Left colon (tissue), 2 donors: ENCODE measurements at regions of chr13 and their contacts with region 1.

Region 1: GRCh38 chr13:47774671-47774994 is 226.4 kb downstream of the SUCLA2 start:
- DNase-seq: no peak
- ATAC-seq: no peak

Region 2: DNA sequence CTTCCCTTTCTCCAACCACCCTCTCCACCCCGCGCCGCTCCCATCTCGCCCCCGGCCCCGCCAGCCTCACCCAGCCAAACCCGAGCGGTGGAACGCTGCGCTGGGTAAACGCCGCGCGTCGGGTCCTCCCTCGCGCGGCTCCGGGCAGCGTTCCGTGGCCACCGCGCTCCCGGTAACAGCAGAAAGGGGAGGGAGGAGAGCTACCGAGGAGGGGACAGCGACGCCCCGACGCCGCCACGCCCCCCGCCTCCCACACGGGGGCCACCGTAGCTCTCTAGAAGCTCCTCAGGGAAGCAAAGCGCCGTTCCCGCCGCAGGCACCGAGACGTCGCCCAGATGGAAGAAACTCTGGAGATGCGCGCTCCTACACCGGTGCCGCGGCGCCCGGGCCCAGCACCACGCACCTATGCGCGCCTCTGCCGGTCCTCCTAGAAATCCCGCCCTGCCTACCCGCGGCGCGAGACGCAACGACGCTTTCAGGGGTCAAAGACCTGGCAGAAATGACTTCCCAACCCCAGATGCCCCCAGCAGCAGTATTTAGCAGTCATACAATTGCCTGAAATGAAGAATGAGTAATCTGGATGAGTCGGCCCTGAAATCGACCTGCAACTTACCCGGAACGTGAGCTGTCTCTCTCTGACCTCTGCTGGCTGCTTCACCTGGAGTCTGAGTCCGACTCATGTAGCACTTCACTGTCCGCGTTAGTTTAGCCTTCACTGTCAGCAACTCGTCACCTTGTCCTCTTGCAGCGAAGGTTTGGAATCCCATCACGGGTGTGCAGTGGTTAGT is 1387.4 kb before region 1 on chr13 and contains the start of gene RUBCNL:
- intact Hi-C with region 1: no loop called
- DNase-seq: peak; percentile 75 to 78
- ATAC-seq: peak; percentile 69
- total RNA-seq, gene RUBCNL: 14.9 to 28.4 TPM

Region 3: DNA sequence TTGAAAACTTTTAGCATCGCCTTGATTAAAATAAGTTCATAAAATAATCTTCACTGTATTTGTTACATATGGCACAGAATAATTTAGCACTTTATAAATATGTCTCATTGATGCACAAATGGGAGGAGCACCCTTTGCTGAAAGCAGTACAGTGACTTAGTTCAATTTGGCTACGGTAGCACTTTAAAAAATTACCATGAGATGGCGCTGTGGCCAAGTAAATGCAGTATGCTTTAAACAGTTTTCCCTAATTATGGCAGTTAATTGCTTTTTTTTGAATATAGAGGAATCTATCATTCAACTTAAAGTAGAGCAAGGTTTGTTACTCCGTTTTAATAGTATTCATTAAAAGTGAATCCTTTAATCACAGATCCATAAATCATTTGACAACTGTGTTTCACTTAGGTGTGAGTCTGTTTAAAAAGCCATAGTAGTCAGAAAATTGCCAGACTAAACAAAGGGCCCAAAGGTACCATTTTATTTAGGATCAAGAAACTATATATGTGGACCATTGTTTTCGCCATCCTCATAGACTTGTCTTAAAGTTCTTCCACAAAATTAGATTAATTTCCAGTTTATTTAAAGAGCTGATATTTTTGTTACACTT is 942.9 kb before region 1 on chr13:
- intact Hi-C with region 1: loop called in 1 of 2 experiments (anchors 5 kb)
- DNase-seq: peak in 1 of 2 donors; percentile 34
- ATAC-seq: peak; percentile 69

Region 4: GRCh38 chr13:47188802-47189201 is 585.8 kb before region 1 on chr13:
- intact Hi-C with region 1: no loop called
- DNase-seq: no peak
- ATAC-seq: no peak

Region 5: DNA sequence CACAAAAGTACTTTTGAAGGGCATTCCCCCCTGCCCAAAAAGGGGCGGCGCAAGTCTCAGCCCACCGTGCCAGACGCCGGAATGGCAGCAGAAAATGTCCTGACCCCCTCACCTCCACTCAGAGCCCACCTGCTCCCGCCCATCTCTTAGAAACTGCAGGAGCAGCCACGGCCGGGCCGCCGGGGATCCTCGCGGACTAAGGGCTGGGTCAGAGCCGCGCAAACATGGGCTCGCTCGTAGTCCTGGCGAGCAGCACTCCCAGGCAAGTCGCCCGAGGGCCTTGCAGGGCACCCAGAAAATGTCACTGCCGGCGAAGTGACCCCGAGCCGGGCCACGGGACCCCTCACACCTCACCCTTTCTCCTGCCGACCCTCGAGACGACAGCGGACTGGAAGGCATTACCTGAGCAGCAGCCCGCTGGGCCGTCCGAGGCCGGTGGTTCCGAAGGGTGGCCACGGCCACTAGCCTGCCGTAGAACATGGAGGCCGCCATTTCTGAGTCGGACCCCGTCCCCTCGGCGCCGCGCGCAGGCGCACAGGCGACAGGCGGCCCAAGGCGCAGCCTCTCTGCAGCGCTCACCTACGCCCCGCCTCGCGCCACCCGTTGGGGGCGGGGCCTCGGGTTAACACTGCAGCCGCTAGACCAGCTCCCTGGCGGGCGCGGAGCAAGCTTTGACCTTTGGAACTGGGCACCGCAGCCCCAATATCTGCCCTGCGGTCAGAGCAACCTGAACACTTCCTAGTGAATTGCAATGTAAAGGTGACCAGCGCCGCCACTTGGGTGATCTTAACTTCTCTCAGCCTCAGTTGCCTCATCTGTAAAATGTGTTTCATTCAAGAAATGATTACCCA is 226.4 kb after region 1 on chr13 and contains the start of gene SUCLA2:
- intact Hi-C with region 1: no loop called
- DNase-seq: peak; percentile 91 to 93
- ATAC-seq: peak; percentile 99
- total RNA-seq, gene SUCLA2: 53.0 to 62.3 TPM